Body of pancreas (tissue), 4 donors: ENCODE measurements at regions of chr22 and their contacts with region 1.

Region 1: DNA sequence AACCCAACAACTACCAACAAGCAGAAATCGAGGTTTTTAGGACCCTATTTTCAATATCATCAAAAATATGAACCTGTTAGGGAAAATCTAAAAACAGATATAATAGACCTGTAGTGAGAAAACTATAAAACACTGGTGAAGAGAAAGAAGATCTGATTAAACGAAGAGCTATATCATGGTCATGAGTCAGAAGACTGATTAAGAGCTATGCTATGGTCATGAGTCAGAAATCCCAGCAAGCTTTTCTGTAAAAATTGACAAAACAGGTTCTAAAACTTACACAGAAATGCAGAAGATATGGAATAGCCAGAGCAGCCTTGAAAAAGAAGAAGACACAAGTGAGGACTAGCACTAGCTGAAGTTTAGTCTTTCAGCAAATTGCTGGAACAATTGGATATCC is 345.0 kb downstream of the TBC1D22A start:
- DNase-seq: no peak
- ATAC-seq: no peak
- H3K4me3 ChIP-seq: no peak overlapping the region
- H3K27ac ChIP-seq: no peak overlapping the region
- H3K4me1 ChIP-seq: peaks cover 24% of the 10 kb centered on the region
- H3K27me3 ChIP-seq: no peaks in the 10 kb centered on the region
- CTCF ChIP-seq: no peak
- POLR2A ChIP-seq: no peak

Region 2: GRCh38 chr22:46934746-46935491 is 172.5 kb before region 1 on chr22:
- intact Hi-C with region 1: no loop called
- DNase-seq: peak in 3 of 4 donors; percentile 58 to 73 (median 66)
- ATAC-seq: peak; percentile 76
- H3K4me3 ChIP-seq: no peak overlapping the region
- H3K27ac ChIP-seq: peak overlapping the region; percentile 21 to 69 (median 36)
- H3K4me1 ChIP-seq: peaks cover 45% of the 10 kb centered on the region
- H3K27me3 ChIP-seq: no peaks in the 10 kb centered on the region
- CTCF ChIP-seq: no peak
- POLR2A ChIP-seq: no peak

Region 3: GRCh38 chr22:47154621-47155081 is 47.2 kb after region 1 on chr22:
- intact Hi-C with region 1: loop called (anchors 10 kb)
- DNase-seq: peak; percentile 87 to 97 (median 94)
- ATAC-seq: peak; percentile 89
- H3K4me3 ChIP-seq: no peak overlapping the region
- H3K27ac ChIP-seq: peak overlapping the region; percentile 52 to 78 (median 64)
- H3K4me1 ChIP-seq: peaks cover 40% of the 10 kb centered on the region
- H3K27me3 ChIP-seq: no peaks in the 10 kb centered on the region
- CTCF ChIP-seq: peak in 4 of 7 experiments; percentile 52 to 71 (median 60)
- POLR2A ChIP-seq: peak; percentile 41 to 58 (median 47)